ENCODE measurements at regions of chr18 and their contacts with region 1.

Region 1: GRCh38 chr18:1811282-1811681 is 760.0 kb downstream of the METTL4 start:
- DNase-seq: no peak
- H3K4me3 ChIP-seq: no peak overlapping the region
- H3K27ac ChIP-seq: no peak overlapping the region
- H3K4me1 ChIP-seq: no peaks in the 10 kb centered on the region
- H3K27me3 ChIP-seq: no peaks in the 10 kb centered on the region
- CTCF ChIP-seq: no peak
- EP300 ChIP-seq: no peak
- POLR2A ChIP-seq: no peak

Region 2: GRCh38 chr18:477565-477964 is 1333.7 kb before region 1 on chr18:
- in situ Hi-C with region 1: no loop called
- intact Hi-C with region 1: loop called (anchors 10 kb)
- DNase-seq: no peak
- H3K4me3 ChIP-seq: no peak overlapping the region
- H3K27ac ChIP-seq: no peak overlapping the region
- H3K4me1 ChIP-seq: peaks cover 0 to 26% (median 2%) of the 10 kb centered on the region in 4 donors
- H3K27me3 ChIP-seq: no peaks in the 10 kb centered on the region
- CTCF ChIP-seq: peak in 3 of 5 experiments; percentile 33 to 42 (median 39)
- EP300 ChIP-seq: no peak
- POLR2A ChIP-seq: no peak

Region 3: GRCh38 chr18:1952486-1952885 is 141.2 kb after region 1 on chr18:
- in situ Hi-C with region 1: no loop called
- intact Hi-C with region 1: no loop called
- DNase-seq: no peak
- H3K4me3 ChIP-seq: no peak overlapping the region
- H3K27ac ChIP-seq: no peak overlapping the region
- H3K4me1 ChIP-seq: no peaks in the 10 kb centered on the region
- H3K27me3 ChIP-seq: no peaks in the 10 kb centered on the region
- CTCF ChIP-seq: no peak
- EP300 ChIP-seq: no peak
- POLR2A ChIP-seq: no peak

Region 4: DNA sequence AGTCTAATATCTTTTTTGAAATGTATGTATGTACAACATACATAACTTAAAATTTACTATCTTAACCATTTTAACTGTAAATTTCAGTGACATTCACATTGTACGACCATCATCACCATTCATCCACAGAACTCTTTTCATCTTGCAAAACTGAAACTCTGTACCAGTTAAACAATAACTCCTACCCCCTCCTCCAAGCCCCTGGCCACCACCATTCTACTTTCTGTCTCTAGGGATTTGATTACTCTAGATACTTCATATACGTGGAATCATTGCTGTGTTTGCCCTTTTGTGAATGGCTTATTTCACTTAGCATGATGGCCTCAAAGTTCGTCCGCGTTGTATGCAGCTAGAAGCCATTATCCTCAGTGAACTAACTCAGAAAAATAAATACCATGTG is 543.0 kb after region 1 on chr18:
- in situ Hi-C with region 1: no loop called
- intact Hi-C with region 1: no loop called
- DNase-seq: no peak
- H3K4me3 ChIP-seq: no peak overlapping the region
- H3K27ac ChIP-seq: no peak overlapping the region
- H3K4me1 ChIP-seq: no peaks in the 10 kb centered on the region
- H3K27me3 ChIP-seq: no peaks in the 10 kb centered on the region
- CTCF ChIP-seq: no peak
- EP300 ChIP-seq: no peak
- POLR2A ChIP-seq: no peak